H1 (cell line): ENCODE measurements at regions of chr11 and their contacts with region 1.

Region 1: DNA sequence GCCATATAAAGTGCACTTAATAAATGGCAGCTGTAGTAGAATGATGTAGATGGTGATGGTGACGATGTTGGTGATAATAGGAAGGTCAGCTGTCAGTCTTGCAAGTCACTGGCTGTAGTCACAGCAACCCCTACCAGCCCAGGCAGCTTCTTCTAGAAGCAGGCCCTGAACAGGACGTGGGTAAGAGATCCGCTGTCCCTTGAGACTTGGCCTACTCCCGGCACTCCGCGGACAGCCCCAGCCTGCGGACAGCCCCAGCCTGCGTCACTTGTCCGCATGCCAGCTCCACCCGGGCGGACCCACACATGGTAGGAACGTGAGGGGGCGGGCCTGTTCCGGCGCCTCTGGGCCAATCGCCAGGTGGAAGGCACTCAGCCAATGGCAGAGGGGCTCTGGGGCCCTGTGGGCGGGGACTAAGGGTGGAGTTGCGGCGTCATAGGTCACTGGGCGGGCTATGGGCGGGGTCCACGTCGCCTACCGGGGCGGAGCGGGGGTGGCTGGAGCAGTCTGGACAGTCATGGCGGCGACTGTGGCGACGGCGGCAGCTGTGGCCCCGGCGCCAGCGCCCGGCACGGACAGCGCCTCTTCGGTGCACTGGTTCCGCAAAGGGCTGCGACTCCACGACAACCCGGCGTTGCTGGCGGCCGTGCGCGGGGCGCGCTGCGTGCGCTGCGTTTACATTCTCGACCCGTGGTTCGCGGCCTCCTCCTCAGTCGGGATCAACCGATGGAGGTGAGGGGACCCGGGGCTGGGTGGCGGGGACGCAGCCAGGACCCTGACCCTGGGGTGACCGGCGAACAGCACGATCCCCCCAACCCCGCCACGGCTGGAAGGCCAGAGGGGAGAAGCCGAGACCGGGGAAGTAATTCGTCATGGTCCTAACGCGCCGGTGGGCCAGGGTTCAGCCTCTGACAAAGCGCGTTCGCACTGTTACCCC is at the start of gene CRY2:
- DNase-seq: peak; percentile 93 to 100
- H3K4me3 ChIP-seq: peak within 1 kb of the TSS; percentile 58 to 90 (median 82)
- H3K27ac ChIP-seq: peak within 1 kb of the TSS; percentile 24; the same call in 1 of the 2 replicates
- H3K4me1 ChIP-seq: peaks cover 0 to 10% (median 6%) of the 10 kb centered on the region in 4 experiments; a peak in 5 of 7 replicates
- H3K27me3 ChIP-seq: peaks cover 5 to 25% (median 12%) of the 10 kb centered on the region in 4 experiments; a peak in 6 of 7 replicates
- CTCF ChIP-seq: no peak; a peak in 1 of 4 replicates
- EP300 ChIP-seq: no peak
- POLR2A ChIP-seq: peak in 1 of 2 experiments; percentile 86; a peak in 2 of 3 replicates
- RAD21 ChIP-seq: no peak
- total RNA-seq, gene CRY2: 9.4 and 10.9 TPM in 2 replicates

Region 2: GRCh38 chr11:45815449-45816146 is 31.6 kb before region 1 on chr11:
- CTCF ChIA-PET with region 1: interaction called, 29 read pairs
- POLR2A ChIA-PET with region 1: interaction called, 3 read pairs
- DNase-seq: no peak
- H3K4me3 ChIP-seq: no peak overlapping the region
- H3K27ac ChIP-seq: no peak overlapping the region
- H3K4me1 ChIP-seq: peaks cover 5 to 7% (median 7%) of the 10 kb centered on the region in 4 experiments; a peak in 4 of 7 replicates
- H3K27me3 ChIP-seq: 0 out of 7 replicates have a peak, but pooled peaks cover 0 to 2% (median 0%) of the 10 kb centered on the region in 4 experiments
- CTCF ChIP-seq: peak in 2 of 3 experiments; percentile 11 to 13; a peak in 2 of 4 replicates
- EP300 ChIP-seq: no peak
- POLR2A ChIP-seq: no peak
- RAD21 ChIP-seq: 0 out of 4 replicates have a peak, but pooled peaks of 1 of the 2 experiments have one; percentile 15

Region 3: GRCh38 chr11:45828996-45829513 is 18.2 kb before region 1 on chr11:
- CTCF ChIA-PET with region 1: interaction called, 50 read pairs
- POLR2A ChIA-PET with region 1: no interaction called
- DNase-seq: no peak
- H3K4me3 ChIP-seq: no peak overlapping the region
- H3K27ac ChIP-seq: no peak overlapping the region
- H3K4me1 ChIP-seq: no peaks in the 10 kb centered on the region; a peak in 1 of 7 replicates
- H3K27me3 ChIP-seq: no peaks in the 10 kb centered on the region
- CTCF ChIP-seq: no peak
- EP300 ChIP-seq: no peak
- POLR2A ChIP-seq: no peak
- RAD21 ChIP-seq: no peak

Region 4: DNA sequence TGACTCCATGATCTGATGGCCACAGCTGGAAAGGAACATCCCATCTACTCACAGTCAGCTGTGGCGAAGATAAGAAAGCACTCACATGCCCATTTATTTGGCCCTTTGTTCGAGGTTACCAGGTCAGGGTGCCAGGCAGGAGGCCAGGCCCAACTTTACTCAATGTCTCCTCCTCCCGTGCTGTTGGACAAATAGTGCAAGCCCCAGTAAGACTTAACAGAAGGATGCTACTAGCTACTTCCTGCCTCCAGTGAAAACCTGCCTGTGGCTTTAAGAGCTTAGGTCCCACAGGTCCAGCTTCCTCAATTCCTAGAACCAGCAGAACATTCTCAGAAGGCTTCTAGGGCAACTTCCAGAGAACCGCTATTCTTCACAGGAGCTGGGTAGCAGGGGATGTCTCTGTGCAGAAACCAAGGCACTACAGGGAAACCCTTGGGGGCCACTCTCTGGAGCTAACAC is 12.9 kb before region 1 on chr11:
- CTCF ChIA-PET with region 1: interaction called, 50 read pairs
- POLR2A ChIA-PET with region 1: no interaction called
- DNase-seq: no peak
- H3K4me3 ChIP-seq: no peak overlapping the region
- H3K27ac ChIP-seq: no peak overlapping the region
- H3K4me1 ChIP-seq: no peaks in the 10 kb centered on the region
- H3K27me3 ChIP-seq: no peaks in the 10 kb centered on the region
- CTCF ChIP-seq: no peak
- EP300 ChIP-seq: no peak
- POLR2A ChIP-seq: no peak
- RAD21 ChIP-seq: no peak

Region 5: GRCh38 chr11:45859661-45860140 is 12.5 kb after region 1 on chr11:
- CTCF ChIA-PET with region 1: interaction called, 15 read pairs
- POLR2A ChIA-PET with region 1: interaction called, 17 read pairs
- DNase-seq: no peak
- H3K4me3 ChIP-seq: no peak overlapping the region
- H3K27ac ChIP-seq: no peak overlapping the region
- H3K4me1 ChIP-seq: peaks cover 12 to 25% (median 16%) of the 10 kb centered on the region in 4 experiments; a peak in 6 of 7 replicates
- H3K27me3 ChIP-seq: no peaks in the 10 kb centered on the region
- CTCF ChIP-seq: no peak
- EP300 ChIP-seq: 0 out of 3 replicates have a peak, but pooled peaks of 1 of the 2 experiments have one; percentile 9
- POLR2A ChIP-seq: no peak
- RAD21 ChIP-seq: no peak